Breast epithelium (tissue), 4 donors: ENCODE measurements at regions of chr3 and their contacts with region 1.

Region 1: DNA sequence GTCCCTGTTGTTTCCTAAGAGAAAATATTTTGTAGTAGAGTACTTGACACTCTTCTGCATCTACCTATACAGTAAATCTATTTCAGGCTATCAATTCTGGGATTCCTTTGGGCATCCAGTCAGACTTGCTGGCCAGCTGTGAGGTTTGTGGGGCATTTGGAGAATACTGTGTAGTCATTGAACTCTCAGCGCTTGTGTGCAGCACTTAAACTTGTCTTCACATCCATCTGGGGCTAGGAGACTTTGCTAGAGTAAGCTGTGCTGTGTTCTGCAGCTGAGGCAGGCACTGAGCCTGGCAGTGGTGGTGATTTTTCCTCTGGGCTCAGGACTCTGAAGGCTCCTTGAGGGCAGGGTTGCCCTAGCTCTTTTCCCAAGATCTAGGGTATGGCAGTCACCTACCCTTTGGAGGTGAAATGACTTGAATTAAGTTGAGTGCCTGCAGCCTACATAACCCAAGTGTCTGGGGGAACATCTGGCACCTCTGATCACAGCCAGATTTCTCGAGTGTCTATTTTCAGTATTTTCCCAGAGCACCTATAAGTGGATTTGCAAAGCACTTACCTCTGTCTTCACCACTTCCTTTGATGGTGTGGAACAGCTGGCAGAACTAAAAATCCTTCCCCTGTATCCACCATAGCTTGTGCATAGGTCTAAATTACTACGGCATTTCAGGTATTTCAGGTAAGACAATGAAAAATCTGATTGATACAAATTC is 19.3 kb downstream of the CLSTN2 start:
- DNase-seq: no peak
- H3K4me3 ChIP-seq: no peak overlapping the region
- H3K27ac ChIP-seq: no peak overlapping the region
- H3K4me1 ChIP-seq: no peaks in the 10 kb centered on the region
- H3K27me3 ChIP-seq: no peaks in the 10 kb centered on the region
- CTCF ChIP-seq: no peak
- POLR2A ChIP-seq: no peak

Region 2: DNA sequence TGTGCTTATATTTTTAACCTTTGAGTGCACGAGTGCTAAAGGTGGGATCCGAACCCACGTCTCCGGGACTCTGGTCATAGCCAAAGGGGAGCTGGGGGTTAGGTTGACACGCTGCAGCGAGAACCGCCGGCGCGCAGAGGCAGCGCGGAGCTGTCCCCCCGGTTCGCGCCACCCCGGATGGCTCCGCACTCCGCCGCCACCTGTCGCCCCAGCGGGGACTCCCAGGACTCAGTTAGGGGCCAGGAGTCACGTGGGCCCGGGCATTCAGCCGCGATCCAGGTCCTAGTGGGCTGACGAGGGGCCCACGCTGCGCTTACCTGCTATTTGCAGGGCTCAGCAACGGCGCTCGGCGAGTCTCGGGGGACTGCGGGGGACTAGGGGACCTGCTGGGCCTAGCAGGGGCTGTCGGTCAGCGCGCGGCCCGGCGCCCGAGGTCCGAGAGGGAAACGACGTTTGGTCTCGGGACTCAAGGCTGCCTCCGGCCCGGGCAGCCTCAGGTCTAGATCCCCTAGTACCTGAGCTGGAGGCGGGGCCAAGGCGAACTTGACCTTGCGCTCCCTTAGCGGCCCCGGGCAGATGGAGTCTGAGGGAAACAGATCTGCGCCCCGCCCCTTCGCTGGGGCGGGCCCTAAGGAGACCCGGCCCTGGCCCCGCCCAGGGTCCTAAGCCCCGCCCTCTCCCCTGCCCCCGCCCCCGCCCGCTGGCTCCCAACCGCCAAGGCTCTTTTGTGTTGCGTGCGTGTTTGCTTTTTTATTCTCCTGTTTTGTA is 276.7 kb before region 1 on chr3 and contains the start of gene NMNAT3:
- intact Hi-C with region 1: no loop called
- DNase-seq: peak; percentile 69 to 76
- H3K4me3 ChIP-seq: peak within 1 kb of the TSS; percentile 72 to 93 (median 85)
- H3K27ac ChIP-seq: peak within 1 kb of the TSS; percentile 79 to 83
- H3K4me1 ChIP-seq: no peaks in the 10 kb centered on the region
- H3K27me3 ChIP-seq: peaks cover 0 to 3% of the 10 kb centered on the region in 2 donors
- CTCF ChIP-seq: no peak
- POLR2A ChIP-seq: no peak
- total RNA-seq, gene NMNAT3: 6.6 to 17.3 (median 9.2) TPM

Region 3: GRCh38 chr3:139979991-139980390 is 25.7 kb after region 1 on chr3:
- intact Hi-C with region 1: loop called (anchors 1 kb)
- DNase-seq: no peak
- H3K4me3 ChIP-seq: no peak overlapping the region
- H3K27ac ChIP-seq: no peak overlapping the region
- H3K4me1 ChIP-seq: no peaks in the 10 kb centered on the region
- H3K27me3 ChIP-seq: no peaks in the 10 kb centered on the region
- CTCF ChIP-seq: no peak
- POLR2A ChIP-seq: no peak